Activated CD4-positive, alpha-beta memory T cell treated with anti-CD3 and anti-CD28 coated beads, Interleukin-2, amount 10 ng/mL, durations not matched to agents 7 days and 5 days (primary cell): ENCODE measurements at regions of chr5 and their contacts with region 1.

Region 1: GRCh38 chr5:141636413-141637122 is at the starts of genes HDAC3 and RELL2:
- DNase-seq: peak; percentile 94
- H3K4me3 Mint-ChIP-seq: peak within 1 kb of the TSS; percentile 93
- H3K27ac Mint-ChIP-seq: peak within 1 kb of the TSS; percentile 80
- H3K4me1 Mint-ChIP-seq: peaks cover 59% of the 10 kb centered on the region
- H3K27me3 Mint-ChIP-seq: no peaks in the 10 kb centered on the region
- total RNA-seq, gene HDAC3: 72.0 to 77.9 TPM
- total RNA-seq, gene RELL2: 18.8 to 19.4 TPM

Region 2: DNA sequence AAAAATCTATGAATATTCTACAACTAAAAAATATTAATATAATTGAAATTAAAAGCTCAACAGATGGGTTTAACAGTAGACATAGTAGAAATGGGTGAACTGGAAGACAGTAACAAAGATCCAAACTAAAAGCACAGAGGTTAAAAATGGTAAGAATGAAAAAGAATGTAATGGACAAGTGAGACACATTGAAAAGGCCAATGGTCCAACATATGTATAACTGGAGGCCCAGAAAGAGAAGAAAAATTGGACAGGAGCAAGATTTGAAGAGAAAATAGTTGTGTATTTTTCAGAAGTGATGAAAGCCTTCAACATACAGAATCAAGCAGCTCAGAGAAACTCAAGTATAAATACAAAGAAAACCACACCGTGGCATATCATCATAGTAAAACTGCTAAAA is 89.1 kb before region 1 on chr5:
- CTCF ChIA-PET with region 1: no interaction called
- POLR2A ChIA-PET with region 1: no interaction called
- DNase-seq: no peak
- H3K4me3 Mint-ChIP-seq: no peak overlapping the region
- H3K27ac Mint-ChIP-seq: no peak overlapping the region
- H3K4me1 Mint-ChIP-seq: peaks cover 2% of the 10 kb centered on the region
- H3K27me3 Mint-ChIP-seq: no peaks in the 10 kb centered on the region

Region 3: GRCh38 chr5:141598391-141599350 is 37.9 kb before region 1 on chr5:
- CTCF ChIA-PET with region 1: interaction called, 150 read pairs
- POLR2A ChIA-PET with region 1: interaction called, 33 read pairs
- DNase-seq: no peak
- H3K4me3 Mint-ChIP-seq: no peak overlapping the region
- H3K27ac Mint-ChIP-seq: peak overlapping the region; percentile 73
- H3K4me1 Mint-ChIP-seq: peaks cover 75% of the 10 kb centered on the region
- H3K27me3 Mint-ChIP-seq: no peaks in the 10 kb centered on the region

Region 4: GRCh38 chr5:141618804-141619554 is 17.6 kb before region 1 on chr5 and contains the start of gene DIAPH1:
- CTCF ChIA-PET with region 1: interaction called, 91 read pairs
- POLR2A ChIA-PET with region 1: interaction called, 100 read pairs
- DNase-seq: peak; percentile 98
- H3K4me3 Mint-ChIP-seq: peak within 1 kb of the TSS; percentile 100
- H3K27ac Mint-ChIP-seq: peak within 1 kb of the TSS; percentile 92
- H3K4me1 Mint-ChIP-seq: peaks cover 53% of the 10 kb centered on the region
- H3K27me3 Mint-ChIP-seq: no peaks in the 10 kb centered on the region
- total RNA-seq, gene DIAPH1: 317 to 323 TPM

Region 5: GRCh38 chr5:141657937-141658545 is 21.5 kb after region 1 on chr5:
- CTCF ChIA-PET with region 1: no interaction called
- POLR2A ChIA-PET with region 1: interaction called, 12 read pairs
- DNase-seq: peak; percentile 27
- H3K4me3 Mint-ChIP-seq: no peak overlapping the region
- H3K27ac Mint-ChIP-seq: no peak overlapping the region
- H3K4me1 Mint-ChIP-seq: peaks cover 3% of the 10 kb centered on the region
- H3K27me3 Mint-ChIP-seq: peaks cover 3% of the 10 kb centered on the region